T-cell (primary cell): ENCODE measurements at regions of chr2 and their contacts with region 1.

Region 1: DNA sequence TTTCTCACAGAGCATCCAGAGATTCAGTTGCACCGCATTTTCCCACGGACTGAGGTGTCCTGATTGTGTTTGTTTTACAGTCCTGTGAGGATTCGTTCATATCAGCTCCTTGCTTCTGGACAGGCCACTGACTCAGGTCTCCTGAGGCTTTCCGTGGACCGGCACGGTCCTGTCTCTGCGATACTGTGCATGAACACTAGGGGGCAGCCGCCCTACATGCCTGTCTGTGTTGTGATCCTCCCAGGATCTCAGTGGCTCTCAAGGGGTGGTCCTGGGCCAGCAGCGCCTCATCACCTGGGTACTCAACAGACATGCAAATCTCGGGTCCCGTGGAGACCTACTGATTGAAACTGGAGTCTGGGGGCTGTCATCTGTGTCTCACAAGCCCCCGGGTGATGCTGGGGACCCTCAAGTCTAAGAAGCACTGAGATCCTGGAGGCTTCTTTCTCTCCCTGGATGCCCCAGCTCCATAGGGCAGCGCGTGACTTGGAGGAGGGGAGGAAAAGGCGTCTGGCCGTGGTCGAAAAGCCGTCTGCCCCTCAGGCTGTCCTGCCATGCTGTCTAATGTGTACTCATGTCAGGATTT is 28.9 kb downstream of the IL1R2 start:
- DNase-seq: peak; percentile 48 to 86 (median 74)
- ATAC-seq: peak; percentile 82 to 92 (median 89)
- H3K4me3 ChIP-seq: no peak overlapping the region
- H3K4me3 Mint-ChIP-seq: no peak overlapping the region
- H3K27ac ChIP-seq: no peak overlapping the region
- H3K27ac Mint-ChIP-seq: no peak overlapping the region
- H3K4me1 ChIP-seq: peaks cover 0 to 6% of the 10 kb centered on the region in 2 experiments
- H3K4me1 Mint-ChIP-seq: peaks cover 6 to 7% (median 6%) of the 10 kb centered on the region in 3 donors
- H3K27me3 ChIP-seq: peaks cover 0 to 5% of the 10 kb centered on the region in 2 experiments
- H3K27me3 Mint-ChIP-seq: peaks cover 3 to 7% of the 10 kb centered on the region in 2 donors

Region 2: DNA sequence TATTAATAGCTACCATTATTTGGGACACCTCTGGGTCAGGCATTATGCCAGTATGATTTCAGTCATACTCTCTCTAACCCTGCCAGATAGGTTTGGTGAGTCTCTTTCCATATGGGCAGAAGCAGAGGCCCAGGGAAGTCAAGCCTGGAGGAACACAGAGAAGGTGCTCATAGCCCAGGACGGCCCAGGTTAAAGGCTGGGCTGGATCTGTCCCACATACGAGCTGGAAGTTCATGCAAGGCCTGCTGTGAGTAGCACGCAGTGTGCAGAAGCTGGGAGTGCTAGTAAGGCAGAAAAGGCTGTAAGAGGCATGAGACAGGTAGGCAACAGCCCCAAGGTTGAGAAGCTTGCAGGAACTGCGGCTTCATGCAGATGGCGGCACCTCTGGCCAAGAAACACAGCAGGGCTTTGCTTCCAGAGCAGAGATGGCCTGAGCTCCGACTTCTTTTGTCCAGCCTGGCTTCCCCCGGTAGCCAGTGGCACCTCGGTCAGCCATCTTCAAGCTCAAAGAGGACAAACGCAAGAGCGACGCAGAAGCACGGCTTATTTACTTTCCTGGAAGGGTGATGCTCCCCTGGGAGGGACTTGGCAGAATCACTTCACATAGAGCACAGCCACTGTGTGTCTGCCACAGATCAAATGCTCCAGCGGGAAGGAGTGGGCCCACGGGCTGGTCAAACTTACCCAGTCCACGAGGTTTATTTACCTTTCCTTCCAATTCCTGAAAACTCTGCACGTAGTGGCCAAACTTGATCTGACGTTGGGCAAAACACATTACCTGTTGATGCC is 381.7 kb before region 1 on chr2:
- CTCF ChIA-PET with region 1: no interaction called
- POLR2A ChIA-PET with region 1: no interaction called
- DNase-seq: no peak
- ATAC-seq: no peak
- H3K4me3 ChIP-seq: no peak overlapping the region
- H3K4me3 Mint-ChIP-seq: no peak overlapping the region
- H3K27ac ChIP-seq: no peak overlapping the region
- H3K27ac Mint-ChIP-seq: no peak overlapping the region
- H3K4me1 ChIP-seq: no peaks in the 10 kb centered on the region
- H3K4me1 Mint-ChIP-seq: no peaks in the 10 kb centered on the region
- H3K27me3 ChIP-seq: no peaks in the 10 kb centered on the region
- H3K27me3 Mint-ChIP-seq: no peaks in the 10 kb centered on the region

Region 3: GRCh38 chr2:101697124-101698013 is 323.3 kb before region 1 on chr2 and contains the start of gene MAP4K4:
- CTCF ChIA-PET with region 1: no interaction called
- POLR2A ChIA-PET with region 1: no interaction called
- DNase-seq: peak; percentile 54 to 85 (median 66)
- ATAC-seq: peak; percentile 66 to 77 (median 76)
- H3K4me3 ChIP-seq: peak within 1 kb of the TSS; percentile 77 to 88
- H3K4me3 Mint-ChIP-seq: peak within 1 kb of the TSS in 2 of 3 donors; percentile 87 to 92
- H3K27ac ChIP-seq: peak within 1 kb of the TSS; percentile 67
- H3K27ac Mint-ChIP-seq: peak within 1 kb of the TSS; percentile 94 to 95
- H3K4me1 ChIP-seq: peaks cover 8 to 26% of the 10 kb centered on the region in 2 experiments
- H3K4me1 Mint-ChIP-seq: peaks cover 24 to 31% (median 24%) of the 10 kb centered on the region in 3 donors
- H3K27me3 ChIP-seq: no peaks in the 10 kb centered on the region
- H3K27me3 Mint-ChIP-seq: no peaks in the 10 kb centered on the region
- total RNA-seq, gene MAP4K4: 84.2 to 148 (median 93.2) TPM

Region 4: GRCh38 chr2:102451963-102452362 is 431.3 kb after region 1 on chr2:
- CTCF ChIA-PET with region 1: interaction called, 4 to 10 read pairs
- POLR2A ChIA-PET with region 1: no interaction called
- DNase-seq: no peak
- ATAC-seq: no peak
- H3K4me3 ChIP-seq: no peak overlapping the region
- H3K4me3 Mint-ChIP-seq: no peak overlapping the region
- H3K27ac ChIP-seq: no peak overlapping the region
- H3K27ac Mint-ChIP-seq: no peak overlapping the region
- H3K4me1 ChIP-seq: no peaks in the 10 kb centered on the region
- H3K4me1 Mint-ChIP-seq: peaks cover 5 to 7% (median 5%) of the 10 kb centered on the region in 3 donors
- H3K27me3 ChIP-seq: peaks cover 0 to 3% of the 10 kb centered on the region in 2 experiments
- H3K27me3 Mint-ChIP-seq: peaks cover 5 to 8% of the 10 kb centered on the region in 2 donors